ENCODE measurements at regions of chr19 and their contacts with region 1.

Region 1: GRCh38 chr19:56314562-56315077 is at the start of gene ZSCAN5A:
- DNase-seq: peak; percentile 93
- ATAC-seq: peak; percentile 77
- H3K4me3 Mint-ChIP-seq: peak within 1 kb of the TSS; percentile 96
- H3K27ac Mint-ChIP-seq: peak within 1 kb of the TSS; percentile 100
- H3K4me1 Mint-ChIP-seq: peaks cover 19% of the 10 kb centered on the region
- H3K27me3 Mint-ChIP-seq: no peaks in the 10 kb centered on the region
- CTCF ChIP-seq: no peak
- total RNA-seq, gene ZSCAN5A: 14.0 and 17.8 TPM in 2 replicates

Region 2: DNA sequence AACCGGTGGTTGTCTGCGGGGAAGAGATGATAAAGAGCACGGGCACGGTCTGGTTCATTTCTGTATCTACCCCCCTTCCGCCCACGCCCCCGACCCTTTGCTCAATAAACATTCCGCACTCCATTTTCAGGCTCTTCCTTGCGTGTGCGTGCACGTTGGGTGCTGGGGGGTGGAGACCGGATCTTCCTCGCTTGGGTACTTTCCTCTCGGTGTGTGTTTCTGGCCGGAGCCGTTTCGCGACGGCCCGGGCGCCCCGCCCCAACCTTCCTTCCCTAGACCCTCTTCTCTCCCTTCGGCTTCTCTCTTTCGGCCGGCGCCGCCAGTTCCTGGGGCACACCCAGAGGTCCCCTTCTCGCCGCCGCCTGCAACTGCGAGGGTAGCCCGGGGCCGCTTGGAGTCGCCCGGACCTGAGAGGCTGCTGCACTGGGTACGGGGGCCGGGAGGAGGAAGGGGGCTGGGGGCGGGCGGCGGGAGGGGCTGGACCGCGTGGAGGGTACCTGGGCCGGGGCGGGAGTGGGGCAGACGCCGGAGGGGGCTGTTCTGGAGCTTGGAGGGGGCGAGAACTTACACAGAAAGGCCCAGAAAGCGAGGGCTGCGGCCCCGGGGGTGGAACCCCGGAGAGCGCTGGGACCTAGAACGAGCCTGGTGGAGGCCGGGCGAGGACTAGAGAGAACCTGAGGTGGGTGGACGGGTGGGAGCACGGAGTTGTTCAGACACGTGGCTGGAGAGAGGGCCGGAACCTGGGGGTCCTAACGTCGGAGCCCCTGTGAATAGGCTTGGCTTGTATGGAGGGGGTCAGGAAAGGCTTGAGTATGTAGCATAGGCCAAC is 671.1 kb before region 1 on chr19 and contains the start of gene ZNF581:
- CTCF ChIA-PET with region 1: no interaction called
- POLR2A ChIA-PET with region 1: no interaction called
- intact Hi-C with region 1: loop called (anchors 10 kb)
- DNase-seq: peak; percentile 84
- ATAC-seq: peak; percentile 51
- H3K4me3 Mint-ChIP-seq: peak within 1 kb of the TSS; percentile 86
- H3K27ac Mint-ChIP-seq: peak within 1 kb of the TSS; percentile 96
- H3K4me1 Mint-ChIP-seq: peaks cover 66% of the 10 kb centered on the region
- H3K27me3 Mint-ChIP-seq: no peaks in the 10 kb centered on the region
- CTCF ChIP-seq: no peak
- total RNA-seq, gene ZNF581: 42.7 and 46.5 TPM in 2 replicates

Region 3: GRCh38 chr19:56111601-56112312 is 202.9 kb before region 1 on chr19:
- CTCF ChIA-PET with region 1: no interaction called
- POLR2A ChIA-PET with region 1: no interaction called
- intact Hi-C with region 1: loop called (anchors 1 kb)
- DNase-seq: peak; percentile 61
- ATAC-seq: peak; percentile 96
- H3K4me3 Mint-ChIP-seq: peak overlapping the region; percentile 77
- H3K27ac Mint-ChIP-seq: peak overlapping the region; percentile 84
- H3K4me1 Mint-ChIP-seq: peaks cover 83% of the 10 kb centered on the region
- H3K27me3 Mint-ChIP-seq: no peaks in the 10 kb centered on the region
- CTCF ChIP-seq: no peak

Region 4: GRCh38 chr19:56140583-56141416 is 173.8 kb before region 1 on chr19 and contains the start of gene ZNF444:
- CTCF ChIA-PET with region 1: no interaction called
- POLR2A ChIA-PET with region 1: no interaction called
- intact Hi-C with region 1: loop called (anchors 1 kb)
- DNase-seq: peak; percentile 96
- ATAC-seq: peak; percentile 86
- H3K4me3 Mint-ChIP-seq: peak within 1 kb of the TSS; percentile 98
- H3K27ac Mint-ChIP-seq: peak within 1 kb of the TSS; percentile 99
- H3K4me1 Mint-ChIP-seq: peaks cover 29% of the 10 kb centered on the region
- H3K27me3 Mint-ChIP-seq: no peaks in the 10 kb centered on the region
- CTCF ChIP-seq: no peak
- total RNA-seq, gene ZNF444: 28.1 and 32.1 TPM in 2 replicates

Region 5: GRCh38 chr19:56393119-56394012 is 78.7 kb after region 1 on chr19 and contains the start of gene ZNF582:
- CTCF ChIA-PET with region 1: no interaction called
- POLR2A ChIA-PET with region 1: no interaction called
- intact Hi-C with region 1: loop called (anchors 1 kb)
- DNase-seq: peak; percentile 85
- ATAC-seq: peak; percentile 96
- H3K4me3 Mint-ChIP-seq: peak within 1 kb of the TSS; percentile 97
- H3K27ac Mint-ChIP-seq: peak within 1 kb of the TSS; percentile 96
- H3K4me1 Mint-ChIP-seq: peaks cover 13% of the 10 kb centered on the region
- H3K27me3 Mint-ChIP-seq: no peaks in the 10 kb centered on the region
- CTCF ChIP-seq: no peak
- total RNA-seq, gene ZNF582: 7.4 and 7.9 TPM in 2 replicates

Measured in activated B cell treated with CpG ODN at 0.5 μM for 24 hours (primary cell).